ENCODE measurements at regions of chr10 and their contacts with region 1.

Region 1: DNA sequence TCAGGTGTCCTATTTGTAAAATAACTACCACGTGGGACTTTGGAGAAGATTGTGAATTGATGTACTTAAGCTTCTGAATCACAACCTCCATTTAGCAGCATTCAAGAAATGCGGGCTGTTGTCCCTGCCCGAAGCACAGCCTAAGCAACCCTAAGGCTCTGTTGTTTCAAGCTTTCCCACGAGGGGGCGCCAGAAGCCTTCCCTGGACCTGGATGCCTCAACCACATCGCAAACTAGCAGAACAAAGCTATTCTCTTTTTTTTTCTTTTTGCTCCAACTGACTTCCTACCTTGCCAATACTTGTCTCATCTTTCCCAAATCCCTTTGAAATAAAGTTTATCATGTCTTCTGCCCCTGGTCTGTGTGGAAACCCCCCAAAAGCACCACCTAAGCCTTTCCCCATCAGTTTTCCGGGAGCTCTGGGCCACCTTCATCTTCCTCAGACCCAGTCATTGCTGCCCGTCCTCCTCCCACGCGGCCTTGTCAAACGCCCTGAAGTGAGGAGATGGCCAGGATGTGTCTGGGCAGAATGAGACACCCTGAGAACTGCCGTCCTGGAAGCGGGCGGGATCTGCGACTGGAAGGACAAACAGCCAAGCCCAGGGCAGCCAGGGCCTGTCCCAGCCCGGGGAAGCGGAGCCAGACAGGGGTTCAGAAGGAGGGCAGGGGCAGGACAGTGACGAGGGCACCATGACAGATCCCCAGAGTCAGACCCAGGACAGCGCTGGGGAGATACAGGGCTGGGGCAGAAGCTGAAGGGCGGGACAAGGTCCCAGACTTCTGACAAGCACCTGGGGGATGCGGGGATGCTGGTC is 112.7 kb downstream of the SLIT1 start:
- DNase-seq: peak; percentile 37 to 83 (median 72)
- ATAC-seq: peak; percentile 59 to 71 (median 67)
- H3K4me3 ChIP-seq: no peak overlapping the region
- H3K4me3 Mint-ChIP-seq: no peak overlapping the region
- H3K27ac ChIP-seq: no peak overlapping the region
- H3K27ac Mint-ChIP-seq: no peak overlapping the region
- H3K4me1 ChIP-seq: peaks cover 0 to 5% of the 10 kb centered on the region in 2 experiments
- H3K4me1 Mint-ChIP-seq: peaks cover 9 to 11% (median 10%) of the 10 kb centered on the region in 3 donors
- H3K27me3 ChIP-seq: peaks cover 0 to 44% of the 10 kb centered on the region in 2 experiments
- H3K27me3 Mint-ChIP-seq: peaks cover 34 to 38% of the 10 kb centered on the region in 2 donors

Region 2: DNA sequence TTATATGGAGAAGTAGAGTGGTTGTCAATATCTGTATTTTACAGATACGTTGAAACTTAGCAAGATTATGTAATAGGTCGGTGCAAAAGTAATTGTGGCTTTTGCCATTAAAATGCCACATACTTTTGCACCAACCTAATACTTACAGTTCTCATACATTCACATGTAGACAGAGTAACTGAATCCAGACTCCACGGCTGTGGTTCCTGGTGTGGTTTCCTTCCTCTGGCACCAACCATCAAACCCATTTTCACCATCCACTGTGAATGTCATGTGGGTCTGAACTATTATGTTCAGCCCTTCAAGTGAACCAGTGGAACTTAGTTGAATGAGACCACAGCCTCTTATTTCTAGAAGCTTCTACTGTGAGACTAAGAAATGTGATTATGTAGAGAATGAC is 144.2 kb after region 1 on chr10:
- CTCF ChIA-PET with region 1: interaction called, 3 to 12 read pairs
- POLR2A ChIA-PET with region 1: no interaction called
- DNase-seq: no peak
- ATAC-seq: no peak
- H3K4me3 ChIP-seq: no peak overlapping the region
- H3K4me3 Mint-ChIP-seq: no peak overlapping the region
- H3K27ac ChIP-seq: no peak overlapping the region
- H3K27ac Mint-ChIP-seq: no peak overlapping the region
- H3K4me1 ChIP-seq: no peaks in the 10 kb centered on the region
- H3K4me1 Mint-ChIP-seq: peaks cover 0 to 10% (median 6%) of the 10 kb centered on the region in 3 donors
- H3K27me3 ChIP-seq: no peaks in the 10 kb centered on the region
- H3K27me3 Mint-ChIP-seq: no peaks in the 10 kb centered on the region